Activated CD4-positive, alpha-beta memory T cell treated with anti-CD3 and anti-CD28 coated beads for 36 hours (primary cell): ENCODE measurements at regions of chr2 and their contacts with region 1.

Region 1: GRCh38 chr2:3242747-3243369 is 134.8 kb downstream of the EIPR1 start:
- DNase-seq: peak; percentile 65
- H3K4me3 Mint-ChIP-seq: peak overlapping the region; percentile 33
- H3K27ac Mint-ChIP-seq: peak overlapping the region; percentile 74
- H3K4me1 Mint-ChIP-seq: peaks cover 30% of the 10 kb centered on the region
- H3K27me3 Mint-ChIP-seq: no peaks in the 10 kb centered on the region

Region 2: GRCh38 chr2:3198119-3198518 is 44.7 kb before region 1 on chr2:
- CTCF ChIA-PET with region 1: no interaction called
- POLR2A ChIA-PET with region 1: no interaction called
- intact Hi-C with region 1: loop called (anchors 2 kb)
- DNase-seq: peak; percentile 68
- H3K4me3 Mint-ChIP-seq: peak overlapping the region; percentile 40
- H3K27ac Mint-ChIP-seq: peak overlapping the region; percentile 78
- H3K4me1 Mint-ChIP-seq: peaks cover 14% of the 10 kb centered on the region
- H3K27me3 Mint-ChIP-seq: no peaks in the 10 kb centered on the region

Region 3: GRCh38 chr2:3277470-3278255 is 34.8 kb after region 1 on chr2:
- CTCF ChIA-PET with region 1: no interaction called
- POLR2A ChIA-PET with region 1: no interaction called
- intact Hi-C with region 1: loop called (anchors 5 kb)
- DNase-seq: no peak
- H3K4me3 Mint-ChIP-seq: no peak overlapping the region
- H3K27ac Mint-ChIP-seq: no peak overlapping the region
- H3K4me1 Mint-ChIP-seq: peaks cover 9% of the 10 kb centered on the region
- H3K27me3 Mint-ChIP-seq: no peaks in the 10 kb centered on the region

Region 4: DNA sequence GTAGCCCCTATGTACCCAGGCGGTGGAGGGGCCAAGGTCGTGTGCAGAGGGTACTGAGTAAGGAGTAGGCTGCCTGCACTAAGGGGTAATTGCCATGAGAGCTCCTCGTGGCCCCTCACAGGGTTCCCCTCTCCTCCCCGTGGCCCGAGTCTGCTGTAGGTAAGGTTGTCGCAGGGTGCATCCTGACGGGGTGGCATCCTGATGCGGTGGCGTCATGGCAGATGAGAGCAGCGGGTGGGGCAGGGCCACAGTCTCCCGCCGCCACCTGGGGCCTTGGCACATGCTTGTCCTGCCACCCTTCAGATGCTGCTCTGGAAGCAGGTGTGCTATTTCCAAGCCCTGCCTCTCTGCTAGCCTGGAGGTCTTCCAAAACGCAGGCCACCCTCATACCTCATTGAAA is 45.0 kb after region 1 on chr2:
- CTCF ChIA-PET with region 1: no interaction called
- POLR2A ChIA-PET with region 1: no interaction called
- intact Hi-C with region 1: no loop called
- DNase-seq: no peak
- H3K4me3 Mint-ChIP-seq: no peak overlapping the region
- H3K27ac Mint-ChIP-seq: no peak overlapping the region
- H3K4me1 Mint-ChIP-seq: peaks cover 7% of the 10 kb centered on the region
- H3K27me3 Mint-ChIP-seq: no peaks in the 10 kb centered on the region

Region 5: DNA sequence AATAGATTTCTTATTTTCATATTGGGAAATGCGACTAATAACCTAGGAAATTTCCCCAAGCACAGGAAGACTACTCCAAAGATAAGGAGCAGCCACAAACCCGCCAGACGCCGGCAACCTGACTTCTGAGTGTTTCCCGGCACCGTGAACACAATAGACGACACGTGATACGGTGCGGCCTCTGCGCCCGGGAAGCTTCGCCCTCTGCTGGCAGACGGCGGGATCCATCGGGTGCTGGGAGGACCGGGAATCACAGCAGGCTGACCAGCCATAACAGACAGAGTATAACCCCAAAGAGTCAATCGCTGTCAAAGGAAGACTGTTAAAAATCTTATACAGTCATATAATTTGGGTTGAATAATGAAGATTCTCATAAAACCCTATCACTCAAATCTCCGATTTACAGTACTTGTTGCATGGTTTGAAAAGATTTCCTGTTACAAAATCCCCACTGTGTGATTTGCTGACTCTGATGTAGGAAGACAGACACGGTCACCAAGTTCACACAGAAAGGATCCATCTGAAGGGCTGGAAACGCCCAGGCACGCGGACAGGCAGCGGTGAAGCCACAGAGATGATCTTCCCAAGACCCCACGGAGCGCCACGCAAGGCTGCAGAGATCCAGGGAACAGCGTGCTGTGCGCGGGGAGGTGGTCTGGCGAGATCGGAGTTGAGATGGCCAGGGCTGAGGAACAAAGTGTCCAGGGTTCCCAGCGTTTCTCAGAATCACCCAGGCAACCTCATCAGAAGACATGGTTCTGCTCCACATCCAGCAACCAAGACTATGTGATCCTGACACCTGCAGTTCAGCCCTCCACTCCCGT is 60.9 kb after region 1 on chr2:
- CTCF ChIA-PET with region 1: no interaction called
- POLR2A ChIA-PET with region 1: no interaction called
- intact Hi-C with region 1: loop called (anchors 2 kb)
- DNase-seq: peak; percentile 90
- H3K4me3 Mint-ChIP-seq: peak overlapping the region; percentile 37
- H3K27ac Mint-ChIP-seq: peak overlapping the region; percentile 42
- H3K4me1 Mint-ChIP-seq: peaks cover 20% of the 10 kb centered on the region
- H3K27me3 Mint-ChIP-seq: no peaks in the 10 kb centered on the region